MCF 10A (cell line): ENCODE measurements at regions of chr1 and their contacts with region 1.

Region 1: GRCh38 chr1:67685067-67685557 is at the start of gene GADD45A:
- DNase-seq: peak; percentile 99
- H3K4me3 Mint-ChIP-seq: peak within 1 kb of the TSS; percentile 87
- H3K27ac Mint-ChIP-seq: peak within 1 kb of the TSS; percentile 89
- H3K4me1 Mint-ChIP-seq: peaks cover 34% of the 10 kb centered on the region
- H3K27me3 Mint-ChIP-seq: no peaks in the 10 kb centered on the region
- CTCF ChIP-seq: no peak
- total RNA-seq, gene GADD45A: 183 and 225 TPM in 2 replicates

Region 2: DNA sequence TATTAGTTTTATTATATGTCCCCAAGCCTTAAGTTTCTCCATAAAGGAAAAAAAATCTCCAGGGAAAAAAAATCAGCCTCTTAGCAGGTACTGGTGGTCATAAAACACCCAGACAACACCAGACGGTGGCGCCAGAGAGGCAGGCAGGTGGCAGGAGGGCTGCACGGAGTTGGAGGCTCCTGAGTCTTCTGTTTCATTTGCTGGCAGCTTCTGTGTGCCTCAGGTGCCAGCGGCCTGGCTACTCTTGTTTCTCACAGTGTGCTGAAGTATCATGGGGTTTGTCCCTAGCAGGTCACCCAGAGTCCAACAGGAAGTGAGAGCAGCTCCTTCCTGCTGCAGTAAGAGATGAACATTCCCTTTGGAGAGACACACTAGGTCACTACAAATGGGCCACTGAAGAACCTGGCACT is 123.4 kb before region 1 on chr1:
- CTCF ChIA-PET with region 1: interaction called, 67 read pairs
- POLR2A ChIA-PET with region 1: interaction called, 72 read pairs
- intact Hi-C with region 1: loop called (anchors 1 kb)
- DNase-seq: peak; percentile 90
- H3K4me3 Mint-ChIP-seq: no peak overlapping the region
- H3K27ac Mint-ChIP-seq: no peak overlapping the region
- H3K4me1 Mint-ChIP-seq: peaks cover 6% of the 10 kb centered on the region
- H3K27me3 Mint-ChIP-seq: no peaks in the 10 kb centered on the region
- CTCF ChIP-seq: peak; percentile 95

Region 3: DNA sequence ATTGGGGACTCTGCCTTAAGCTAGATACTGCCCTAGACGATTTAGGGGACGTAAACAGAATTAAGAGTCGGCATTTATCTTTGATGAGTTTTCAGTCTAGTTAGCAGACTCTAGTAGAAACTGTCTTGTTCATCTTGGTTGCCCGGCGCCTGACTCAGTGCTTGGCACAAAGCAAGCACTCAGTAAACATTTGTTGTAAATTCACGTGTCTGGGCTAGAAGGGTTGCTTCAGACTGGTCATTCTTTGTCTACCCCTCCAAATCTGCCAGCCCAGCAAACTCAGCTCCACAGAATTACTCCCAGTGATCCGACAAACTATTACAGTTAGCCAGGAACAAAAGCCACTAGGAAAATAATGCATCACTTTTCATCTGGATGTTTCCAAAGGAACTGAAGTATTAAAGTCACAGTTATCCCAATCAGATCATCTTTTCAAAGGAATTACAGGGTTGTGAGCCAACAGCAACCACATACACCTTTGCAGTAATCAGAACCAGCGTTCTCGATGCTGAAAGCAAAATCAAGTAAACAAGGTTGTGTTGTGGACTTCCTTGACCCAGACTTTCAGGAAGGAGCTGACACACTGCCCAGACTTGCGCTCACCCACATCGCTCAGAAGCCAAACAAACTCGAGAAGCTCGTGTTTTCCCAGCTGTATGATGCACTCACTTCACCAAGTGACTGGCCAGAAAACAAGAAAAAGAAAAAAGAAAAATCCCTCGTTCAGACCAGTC is 66.7 kb before region 1 on chr1:
- CTCF ChIA-PET with region 1: interaction called, 4 read pairs
- POLR2A ChIA-PET with region 1: interaction called, 76 read pairs
- intact Hi-C with region 1: no loop called
- DNase-seq: peak; percentile 70
- H3K4me3 Mint-ChIP-seq: peak overlapping the region; percentile 47
- H3K27ac Mint-ChIP-seq: peak overlapping the region; percentile 94
- H3K4me1 Mint-ChIP-seq: peaks cover 32% of the 10 kb centered on the region
- H3K27me3 Mint-ChIP-seq: no peaks in the 10 kb centered on the region
- CTCF ChIP-seq: no peak

Region 4: GRCh38 chr1:67652800-67653199 is 32.3 kb before region 1 on chr1:
- CTCF ChIA-PET with region 1: interaction called, 3 read pairs
- POLR2A ChIA-PET with region 1: interaction called, 14 read pairs
- intact Hi-C with region 1: no loop called
- DNase-seq: peak; percentile 83
- H3K4me3 Mint-ChIP-seq: no peak overlapping the region
- H3K27ac Mint-ChIP-seq: peak overlapping the region; percentile 24
- H3K4me1 Mint-ChIP-seq: peaks cover 8% of the 10 kb centered on the region
- H3K27me3 Mint-ChIP-seq: no peaks in the 10 kb centered on the region
- CTCF ChIP-seq: no peak

Region 5: GRCh38 chr1:67735806-67736627 is 50.9 kb after region 1 on chr1:
- CTCF ChIA-PET with region 1: interaction called, 12 read pairs
- POLR2A ChIA-PET with region 1: interaction called, 65 read pairs
- intact Hi-C with region 1: no loop called
- DNase-seq: peak; percentile 98
- H3K4me3 Mint-ChIP-seq: peak overlapping the region; percentile 64
- H3K27ac Mint-ChIP-seq: peak overlapping the region; percentile 96
- H3K4me1 Mint-ChIP-seq: peaks cover 34% of the 10 kb centered on the region
- H3K27me3 Mint-ChIP-seq: no peaks in the 10 kb centered on the region
- CTCF ChIP-seq: no peak

Region 6: GRCh38 chr1:67760030-67760821 is 75.1 kb after region 1 on chr1:
- CTCF ChIA-PET with region 1: interaction called, 63 read pairs
- POLR2A ChIA-PET with region 1: interaction called, 446 read pairs
- intact Hi-C with region 1: loop called (anchors 1 kb)
- DNase-seq: peak; percentile 76
- H3K4me3 Mint-ChIP-seq: no peak overlapping the region
- H3K27ac Mint-ChIP-seq: peak overlapping the region; percentile 57
- H3K4me1 Mint-ChIP-seq: peaks cover 27% of the 10 kb centered on the region
- H3K27me3 Mint-ChIP-seq: no peaks in the 10 kb centered on the region
- CTCF ChIP-seq: peak; percentile 67

Region 7: GRCh38 chr1:68111519-68112436 is 426.7 kb after region 1 on chr1:
- CTCF ChIA-PET with region 1: no interaction called
- POLR2A ChIA-PET with region 1: interaction called, 3 read pairs
- intact Hi-C with region 1: loop called (anchors 5 kb)
- DNase-seq: peak; percentile 79
- H3K4me3 Mint-ChIP-seq: no peak overlapping the region
- H3K27ac Mint-ChIP-seq: no peak overlapping the region
- H3K4me1 Mint-ChIP-seq: peaks cover 19% of the 10 kb centered on the region
- H3K27me3 Mint-ChIP-seq: no peaks in the 10 kb centered on the region
- CTCF ChIP-seq: peak; percentile 65